GM23248 (cell line): ENCODE measurements at regions of chr9 and their contacts with region 1.

Region 1: GRCh38 chr9:96217754-96218693 is 84.0 kb downstream of the HSD17B3 start:
- DNase-seq: peak; percentile 80
- H3K4me3 ChIP-seq: peak overlapping the region; percentile 66
- H3K27ac ChIP-seq: no peak overlapping the region
- H3K4me1 ChIP-seq: no peaks in the 10 kb centered on the region
- H3K27me3 ChIP-seq: peaks cover 13% of the 10 kb centered on the region; the same call in 1 of the 2 replicates

Region 2: GRCh38 chr9:95726756-95727155 is 491.3 kb before region 1 on chr9:
- in situ Hi-C with region 1: loop called (anchors 25 kb)
- DNase-seq: peak; percentile 66
- H3K4me3 ChIP-seq: no peak overlapping the region
- H3K27ac ChIP-seq: no peak overlapping the region
- H3K4me1 ChIP-seq: no peaks in the 10 kb centered on the region
- H3K27me3 ChIP-seq: peaks cover 23% of the 10 kb centered on the region